ENCODE measurements at regions of chr11 and their contacts with region 1.

Region 1: GRCh38 chr11:47176328-47177228 is at the start of gene ARFGAP2:
- DNase-seq: peak; percentile 94 to 100 (median 98)

Region 2: GRCh38 chr11:46845740-46846509 is 330.7 kb before region 1 on chr11 and contains the start of gene CKAP5:
- intact Hi-C with region 1: no loop called
- DNase-seq: peak; percentile 88 to 99 (median 92)

Region 3: DNA sequence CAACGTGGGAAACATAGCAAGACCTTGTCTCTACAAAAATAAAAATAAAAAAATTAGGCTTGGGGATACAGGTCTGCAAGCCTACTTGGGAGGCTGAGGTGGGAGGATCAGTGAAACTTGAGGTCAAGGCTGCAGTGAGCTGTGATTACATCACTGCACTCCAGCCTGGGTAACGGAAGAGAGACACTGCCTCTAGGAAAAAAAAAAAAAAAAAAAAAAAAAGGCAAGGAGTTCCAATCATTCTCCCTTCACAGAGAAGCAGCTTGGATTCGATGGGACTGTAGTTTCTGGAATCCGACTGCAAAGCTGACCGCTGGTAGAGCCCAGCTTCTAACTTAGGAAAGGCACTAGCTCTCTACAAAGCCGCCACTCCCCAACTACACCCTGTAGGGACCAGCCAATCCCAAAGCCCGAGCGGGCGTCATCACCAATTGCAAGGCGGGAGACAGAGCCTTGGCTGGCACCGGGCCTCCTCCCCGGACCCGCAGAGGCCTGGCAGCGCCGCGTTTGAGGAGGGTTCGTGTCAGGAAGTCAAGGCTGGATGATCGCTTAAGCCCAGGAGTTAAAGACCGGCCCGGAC is 37.5 kb after region 1 on chr11:
- intact Hi-C with region 1: loop called (anchors 2 kb)
- DNase-seq: peak; percentile 92 to 99 (median 96)

Region 4: DNA sequence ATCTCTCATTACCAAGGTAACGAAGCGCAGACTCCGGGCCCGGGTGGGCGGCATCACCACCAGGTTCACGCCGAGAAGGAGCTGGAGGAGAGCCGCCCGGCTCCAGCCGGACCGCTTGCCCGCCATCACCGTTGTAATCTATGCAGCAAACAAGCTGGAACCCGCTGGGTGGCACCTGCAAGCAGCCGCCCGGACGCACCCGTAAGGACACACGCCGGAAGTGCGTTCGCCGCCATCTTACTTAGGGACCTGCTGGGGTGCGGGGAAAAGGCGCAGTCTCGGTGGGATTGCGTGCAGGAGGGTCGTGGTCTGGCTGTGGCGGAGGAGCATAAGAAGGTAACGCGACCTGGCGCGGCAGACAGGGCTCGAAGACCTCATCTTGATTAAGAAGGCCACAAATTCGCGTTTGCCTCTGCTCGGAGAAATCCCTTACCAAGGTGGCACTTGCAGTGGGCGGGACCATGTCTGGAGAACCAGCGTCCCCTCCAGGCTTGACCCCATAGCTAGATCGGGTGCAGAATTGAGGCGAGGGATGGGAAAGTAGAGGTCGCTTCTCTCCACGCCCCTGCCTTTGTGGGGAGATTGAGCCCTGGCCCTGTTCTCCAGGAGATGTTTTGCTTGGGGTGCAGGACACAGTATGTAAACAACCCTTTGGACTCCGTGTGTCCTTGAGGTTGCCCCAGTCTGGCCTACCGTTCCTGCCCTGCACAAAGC is 72.2 kb after region 1 on chr11 and contains the start of gene ACP2:
- intact Hi-C with region 1: loop called (anchors 2 kb)
- DNase-seq: peak; percentile 82 to 99 (median 92)

Region 5: GRCh38 chr11:47269002-47269828 is 92.6 kb after region 1 on chr11:
- intact Hi-C with region 1: loop called (anchors 1 kb)
- DNase-seq: peak; percentile 70 to 98 (median 85)

Region 6: GRCh38 chr11:47355283-47356128 is 178.9 kb after region 1 on chr11:
- intact Hi-C with region 1: loop called (anchors 1 kb)
- DNase-seq: peak; percentile 82 to 99 (median 93)

Region 7: DNA sequence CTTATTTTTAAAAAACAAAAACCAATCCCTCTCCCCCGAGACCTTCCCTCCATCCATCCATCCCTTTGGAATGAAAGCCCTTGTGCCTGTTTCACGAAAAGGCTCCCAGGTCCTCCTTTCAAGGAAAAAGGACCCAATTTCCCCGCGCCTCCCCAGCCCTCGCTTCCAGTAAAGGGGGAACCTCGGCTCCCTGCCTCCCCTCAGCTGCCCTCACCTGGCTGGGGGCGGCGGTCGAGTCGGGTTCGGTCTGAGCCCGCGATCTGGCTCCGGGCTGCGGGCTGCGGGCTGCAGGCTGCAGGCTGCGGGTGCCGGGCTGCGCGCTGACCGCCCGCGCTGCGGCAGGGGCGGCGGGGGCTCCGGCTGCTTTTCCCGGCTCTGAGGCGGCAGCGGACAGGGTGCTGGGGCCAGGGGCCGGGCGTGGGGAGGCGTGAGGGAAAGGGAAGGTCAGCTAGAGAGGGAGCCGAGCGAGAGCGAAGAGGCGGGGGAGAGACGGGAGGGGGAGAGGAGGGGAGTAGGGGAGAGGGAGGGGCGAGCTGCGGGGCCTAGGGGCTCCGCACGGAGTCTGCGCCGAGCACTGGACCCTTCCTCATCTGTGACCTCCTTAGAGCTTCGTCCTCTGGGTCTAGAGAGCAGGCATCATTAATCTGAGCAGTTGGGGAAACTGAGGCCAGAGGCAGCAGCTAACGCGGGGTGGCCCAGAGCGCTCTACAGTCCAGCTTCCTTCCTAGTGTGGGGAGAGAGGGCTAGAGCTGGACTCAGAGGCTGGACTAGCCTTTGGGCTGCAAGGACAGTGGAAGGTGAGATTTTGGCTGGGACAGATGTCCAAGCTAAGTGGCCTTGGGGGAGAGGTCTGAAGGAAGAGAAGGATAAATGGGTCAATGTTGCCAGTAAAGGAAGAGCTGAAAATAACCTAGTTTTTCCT is 417.6 kb after region 1 on chr11 and contains the start of gene C1QTNF4:
- intact Hi-C with region 1: no loop called
- DNase-seq: peak in 1 of 10 donors; percentile 83